ENCODE measurements at regions of chr6 and their contacts with region 1.

Region 1: DNA sequence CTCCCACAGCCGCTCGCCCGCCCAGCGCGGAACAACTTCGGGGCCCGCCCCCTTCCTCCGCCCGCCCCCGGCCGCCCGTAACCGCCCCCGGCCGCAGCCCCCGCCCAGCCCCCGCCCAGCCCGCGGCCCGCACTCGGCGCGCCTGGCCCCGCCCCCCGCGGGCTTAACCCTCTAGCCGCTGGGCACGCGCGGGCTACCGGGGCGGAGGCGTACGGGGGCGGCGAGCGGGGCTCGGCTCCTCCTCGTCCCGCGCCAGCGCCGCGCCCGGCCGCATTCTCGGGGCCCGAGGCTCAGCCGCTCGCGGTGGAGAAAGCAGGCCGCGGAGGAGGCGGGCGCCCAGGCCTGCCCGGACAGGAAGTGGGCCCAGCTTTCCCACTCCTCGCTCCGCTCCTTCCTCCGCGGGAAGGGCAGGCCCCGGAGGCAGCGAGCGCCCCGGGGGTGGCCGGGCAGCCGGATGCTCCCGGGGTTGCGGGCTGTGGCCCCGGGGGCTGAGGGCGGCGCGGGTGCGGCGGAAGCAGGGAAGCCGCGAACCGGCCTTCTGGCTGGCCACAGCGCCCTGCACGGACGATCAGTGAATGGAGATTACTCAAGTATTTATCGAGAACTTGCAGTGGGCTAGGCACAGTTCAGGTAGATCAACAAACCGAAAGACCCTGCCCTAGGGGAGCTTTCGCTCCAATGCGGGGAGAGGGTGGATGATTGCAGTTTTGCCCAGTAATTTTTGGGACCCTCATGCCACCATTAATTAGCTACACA is at the start of gene TRAM2:
- DNase-seq: peak; percentile 84
- H3K4me3 ChIP-seq: peak within 1 kb of the TSS; percentile 69 to 85 (median 70)
- H3K27ac ChIP-seq: peak within 1 kb of the TSS; percentile 96 to 99 (median 97)
- H3K4me1 ChIP-seq: peaks cover 36 to 41% of the 10 kb centered on the region in 2 donors
- H3K27me3 ChIP-seq: no peaks in the 10 kb centered on the region
- CTCF ChIP-seq: peak in 2 of 6 experiments; percentile 4 to 10
- POLR2A ChIP-seq: peak; percentile 27 to 75
- total RNA-seq, gene TRAM2: 16.5 to 21.8 (median 19.7) TPM

Region 2: DNA sequence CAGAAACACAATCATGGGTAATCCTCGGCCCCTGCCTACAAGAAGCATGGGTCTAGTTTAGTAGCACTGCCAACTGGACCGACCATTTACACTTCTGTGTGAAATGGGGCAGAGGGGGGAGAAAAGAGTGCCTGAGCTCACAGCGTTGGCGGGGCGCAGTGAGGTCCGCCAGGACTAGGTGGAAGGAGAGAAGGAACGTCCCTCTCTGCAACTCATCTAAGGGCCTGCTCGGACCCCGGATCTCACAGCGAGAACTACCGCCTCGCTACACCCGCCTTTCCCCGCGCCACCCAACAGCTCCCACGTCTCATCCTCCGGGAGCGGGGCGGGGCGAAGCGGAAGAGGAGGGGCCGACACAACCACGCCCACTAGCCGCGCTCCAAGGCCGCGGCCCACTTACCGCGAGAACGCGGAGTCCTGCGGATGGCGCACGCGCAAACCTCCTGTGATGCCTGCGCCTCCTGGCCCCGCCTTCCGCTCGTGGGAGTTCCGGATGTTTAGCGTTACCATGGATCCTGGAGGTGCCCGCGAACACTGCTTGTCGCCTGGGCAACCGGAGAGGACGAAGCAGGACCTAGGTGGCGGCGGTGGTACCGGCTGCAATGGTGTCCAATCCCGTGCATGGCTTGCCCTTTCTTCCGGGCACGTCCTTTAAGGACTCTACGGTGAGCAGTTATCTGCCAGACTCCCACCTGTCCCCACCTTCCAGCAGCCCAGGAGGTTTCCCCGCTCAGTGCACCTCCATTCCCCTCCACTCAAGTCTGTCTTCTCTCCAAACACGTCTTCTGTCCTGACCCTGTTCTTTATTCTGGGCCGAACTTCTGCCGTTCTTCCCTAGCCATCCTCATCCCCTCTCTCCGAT is 157.2 kb before region 1 on chr6 and contains the start of gene EFHC1:
- intact Hi-C with region 1: loop called (anchors 5 kb)
- DNase-seq: peak; percentile 99
- H3K4me3 ChIP-seq: peak within 1 kb of the TSS; percentile 32 to 69 (median 33)
- H3K27ac ChIP-seq: peak within 1 kb of the TSS; percentile 57 to 74 (median 72)
- H3K4me1 ChIP-seq: peaks cover 7 to 26% of the 10 kb centered on the region in 2 donors
- H3K27me3 ChIP-seq: no peaks in the 10 kb centered on the region
- CTCF ChIP-seq: no peak
- POLR2A ChIP-seq: peak; percentile 22 to 91
- total RNA-seq, gene EFHC1: 39.4 to 96.5 (median 41.6) TPM

Region 3: DNA sequence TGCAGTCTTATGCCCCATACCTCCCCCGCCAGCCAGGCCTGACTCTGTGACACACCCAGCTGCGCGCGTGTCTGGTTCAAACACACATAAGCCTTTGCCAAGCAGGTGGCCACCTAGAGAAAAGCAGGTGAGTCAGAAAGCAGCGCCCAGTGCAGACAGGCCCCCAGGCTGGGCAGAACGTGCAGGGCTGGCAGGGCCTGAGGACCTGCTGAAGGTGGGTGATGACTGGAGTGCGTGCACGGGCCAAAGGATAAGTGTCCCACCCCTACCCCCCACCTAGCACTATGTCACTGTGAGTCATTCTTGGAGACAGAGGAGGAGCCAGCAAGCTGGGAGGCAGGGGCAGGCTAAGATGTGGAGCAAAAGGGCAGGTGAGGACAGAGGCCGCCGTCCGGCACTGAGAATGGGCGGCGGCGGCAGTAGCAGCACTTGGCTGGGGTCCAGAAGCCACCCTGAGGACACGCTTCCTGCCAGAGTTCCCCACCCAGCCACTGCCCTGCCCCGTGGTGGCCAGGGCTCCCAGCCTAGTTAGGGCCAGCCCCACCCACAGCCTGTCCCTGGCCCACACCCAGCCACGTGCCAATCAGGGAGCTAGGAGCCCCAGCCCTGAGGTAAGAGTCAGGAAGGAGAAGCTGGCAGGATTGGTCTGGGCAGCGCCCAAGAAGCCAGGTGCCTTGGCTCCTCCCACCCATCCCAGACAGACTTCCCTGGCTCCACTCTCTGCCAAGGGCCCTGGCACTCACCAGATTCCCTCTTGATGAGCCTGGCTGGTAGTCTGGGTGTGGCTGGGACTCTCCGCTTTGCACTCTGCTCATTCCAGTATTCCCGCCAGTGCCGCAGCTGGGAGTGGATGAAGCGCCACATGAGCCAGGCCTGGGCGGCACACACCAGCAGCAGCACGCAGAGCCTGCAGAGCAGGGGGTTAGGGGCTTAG is 73.1 kb before region 1 on chr6:
- intact Hi-C with region 1: loop called (anchors 5 kb)
- DNase-seq: peak; percentile 99
- H3K4me3 ChIP-seq: no peak overlapping the region
- H3K27ac ChIP-seq: peak overlapping the region; percentile 68 to 76 (median 71)
- H3K4me1 ChIP-seq: peaks cover 7 to 37% of the 10 kb centered on the region in 2 donors
- H3K27me3 ChIP-seq: no peaks in the 10 kb centered on the region
- CTCF ChIP-seq: no peak
- POLR2A ChIP-seq: no peak

Measured in thyroid gland (tissue), 4 donors.